ENCODE measurements at regions of chr11 and their contacts with region 1.

Region 1: DNA sequence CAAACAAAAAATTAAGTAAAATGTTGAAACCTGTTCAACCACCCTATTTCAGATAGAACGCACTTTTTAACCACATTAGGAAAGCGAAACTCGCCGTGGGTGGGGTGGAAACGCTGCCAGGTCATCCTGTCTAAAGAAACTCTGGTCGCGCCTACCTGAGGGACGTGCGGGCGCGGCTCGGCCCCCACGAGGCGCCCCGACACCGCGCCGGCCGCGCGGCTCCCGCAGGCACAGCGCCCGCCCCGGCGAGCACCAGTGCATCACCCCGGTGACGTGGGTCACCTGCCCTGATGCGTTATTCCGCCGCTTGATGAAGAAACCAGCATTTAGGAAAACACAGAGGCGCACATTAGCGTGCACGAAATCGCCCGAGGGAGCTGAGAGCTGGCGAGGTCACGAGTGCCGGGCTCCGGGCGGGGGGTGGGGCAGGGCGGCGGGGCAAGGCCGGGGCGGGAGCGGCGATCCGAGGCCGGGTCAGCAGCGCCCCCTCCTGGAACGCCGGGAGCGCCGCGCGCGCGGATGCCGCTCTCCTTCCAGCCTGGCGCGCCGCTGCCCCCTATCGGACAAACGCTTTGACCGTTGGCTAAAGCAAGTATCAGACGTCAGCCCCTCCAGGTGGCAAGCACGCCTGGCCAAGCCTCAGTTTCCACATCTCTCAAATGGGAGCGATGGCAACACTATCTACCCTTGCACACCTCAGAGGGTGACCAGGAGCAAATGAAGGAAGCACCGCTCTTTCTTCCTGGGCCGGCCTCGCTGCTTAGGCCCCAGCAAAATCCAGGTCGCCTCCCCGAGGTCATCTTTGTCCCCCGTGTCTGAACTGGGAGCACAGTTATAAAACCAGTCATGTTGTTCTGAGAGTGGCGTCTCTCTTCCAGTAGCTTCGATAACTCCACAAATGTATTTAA is 15.7 kb upstream of the SNX32 start:
- DNase-seq: peak; percentile 93 to 95
- H3K4me3 ChIP-seq: peak overlapping the region; percentile 55 to 67
- H3K27ac ChIP-seq: peak overlapping the region; percentile 40 to 65
- H3K4me1 ChIP-seq: peaks cover 0 to 10% (median 0%) of the 10 kb centered on the region in 4 donors
- H3K27me3 ChIP-seq: no peaks in the 10 kb centered on the region
- CTCF ChIP-seq: peak; percentile 98 to 100

Region 2: DNA sequence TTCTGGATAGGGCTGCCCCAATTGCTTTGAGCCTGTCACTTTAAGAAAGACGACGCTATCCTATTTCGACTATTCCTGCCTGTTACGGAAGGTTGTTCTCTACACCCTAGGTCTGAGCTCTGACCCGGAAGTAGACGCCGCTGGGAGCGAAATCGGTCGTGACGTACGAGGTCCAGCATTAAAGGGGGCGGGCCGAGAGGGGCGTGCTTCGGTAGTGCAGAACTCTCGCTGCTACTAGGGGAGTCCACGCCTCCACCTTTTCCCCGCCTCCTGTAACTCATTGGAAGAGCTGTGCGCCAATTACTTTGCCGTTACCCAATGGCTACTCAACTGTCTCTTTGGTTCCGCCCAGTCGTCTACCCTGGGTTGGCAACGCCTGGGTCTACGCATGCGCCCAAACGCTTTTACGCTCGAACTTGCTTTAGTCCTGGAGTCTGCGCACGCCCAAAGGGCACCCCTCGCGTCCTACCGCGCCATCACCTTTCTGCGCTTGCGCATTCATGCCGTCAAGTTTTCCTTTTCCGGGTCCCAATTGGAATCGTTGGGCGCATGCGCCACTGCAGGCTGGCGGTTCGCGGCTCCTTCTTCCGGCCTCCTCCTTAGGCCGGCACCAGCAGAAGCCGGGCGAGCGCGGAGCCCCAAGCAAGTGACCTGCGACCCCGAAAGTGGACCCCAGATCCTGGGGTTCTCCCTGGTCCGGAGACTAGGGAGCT is 202.7 kb before region 1 on chr11 and contains the start of gene PCNX3:
- intact Hi-C with region 1: loop called (anchors 5 kb)
- DNase-seq: peak; percentile 100
- H3K4me3 ChIP-seq: peak within 1 kb of the TSS; percentile 98
- H3K27ac ChIP-seq: peak within 1 kb of the TSS; percentile 88 to 96
- H3K4me1 ChIP-seq: peaks cover 0 to 59% (median 49%) of the 10 kb centered on the region in 4 donors
- H3K27me3 ChIP-seq: no peaks in the 10 kb centered on the region
- CTCF ChIP-seq: no peak

Region 3: GRCh38 chr11:65625628-65626342 is 192.3 kb before region 1 on chr11:
- intact Hi-C with region 1: loop called (anchors 5 kb)
- DNase-seq: peak in 1 of 2 donors; percentile 57
- H3K4me3 ChIP-seq: no peak overlapping the region
- H3K27ac ChIP-seq: no peak overlapping the region
- H3K4me1 ChIP-seq: no peaks in the 10 kb centered on the region
- H3K27me3 ChIP-seq: no peaks in the 10 kb centered on the region
- CTCF ChIP-seq: peak; percentile 38 to 49

Region 4: GRCh38 chr11:65700391-65700790 is 117.7 kb before region 1 on chr11:
- intact Hi-C with region 1: loop called (anchors 2 kb)
- DNase-seq: peak in 1 of 2 donors; percentile 19
- H3K4me3 ChIP-seq: no peak overlapping the region
- H3K27ac ChIP-seq: no peak overlapping the region
- H3K4me1 ChIP-seq: no peaks in the 10 kb centered on the region
- H3K27me3 ChIP-seq: peaks cover 0 to 15% of the 10 kb centered on the region in 2 donors
- CTCF ChIP-seq: no peak

Region 5: GRCh38 chr11:65714451-65714850 is 103.6 kb before region 1 on chr11:
- intact Hi-C with region 1: loop called (anchors 2 kb)
- DNase-seq: no peak
- H3K4me3 ChIP-seq: no peak overlapping the region
- H3K27ac ChIP-seq: no peak overlapping the region
- H3K4me1 ChIP-seq: peaks cover 0 to 40% (median 28%) of the 10 kb centered on the region in 4 donors
- H3K27me3 ChIP-seq: no peaks in the 10 kb centered on the region
- CTCF ChIP-seq: no peak

Region 6: GRCh38 chr11:65767406-65767805 is 50.7 kb before region 1 on chr11:
- intact Hi-C with region 1: no loop called
- DNase-seq: no peak
- H3K4me3 ChIP-seq: no peak overlapping the region
- H3K27ac ChIP-seq: no peak overlapping the region
- H3K4me1 ChIP-seq: peaks cover 0 to 6% (median 2%) of the 10 kb centered on the region in 4 donors
- H3K27me3 ChIP-seq: no peaks in the 10 kb centered on the region
- CTCF ChIP-seq: no peak

Region 7: DNA sequence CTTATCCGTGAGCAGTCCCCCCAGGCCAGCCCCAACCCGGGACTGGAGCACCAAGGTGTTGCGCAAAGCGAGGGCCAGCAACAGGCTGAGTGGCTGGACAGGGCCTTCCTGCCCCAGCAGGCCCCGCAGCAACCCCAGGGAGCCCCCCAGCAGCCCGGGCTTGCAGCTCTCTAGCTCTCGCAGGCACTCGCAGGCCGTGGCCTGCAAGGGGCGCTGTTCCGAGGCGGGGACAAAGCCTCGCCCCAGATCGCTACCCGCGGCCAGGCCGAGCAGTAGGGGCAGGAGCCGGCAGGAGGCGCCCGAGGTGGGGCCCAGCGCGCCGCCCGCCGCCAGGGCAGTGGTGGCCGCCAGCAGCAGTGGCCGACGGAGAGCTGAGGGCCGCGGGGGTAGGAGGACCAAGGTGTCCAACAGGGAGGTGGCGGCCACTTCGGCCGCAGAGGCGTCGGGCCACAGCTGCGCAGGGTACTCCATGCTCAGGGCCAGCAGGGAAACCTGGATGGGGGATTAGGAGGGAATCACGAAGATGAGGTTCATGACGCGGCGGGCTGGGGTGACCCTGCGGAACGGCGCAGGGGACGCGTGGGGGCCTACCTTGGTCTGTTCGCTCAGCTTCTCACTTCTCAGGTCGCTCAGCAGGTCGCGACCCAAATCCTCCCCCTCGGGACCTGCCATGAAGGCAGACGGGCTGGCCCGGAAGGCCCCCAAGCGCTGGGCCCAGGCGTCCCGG is 38.1 kb before region 1 on chr11:
- intact Hi-C with region 1: loop called (anchors 5 kb)
- DNase-seq: peak; percentile 57 to 88
- H3K4me3 ChIP-seq: peak overlapping the region; percentile 72 to 90
- H3K27ac ChIP-seq: peak overlapping the region; percentile 73 to 87
- H3K4me1 ChIP-seq: peaks cover 0 to 32% (median 19%) of the 10 kb centered on the region in 4 donors
- H3K27me3 ChIP-seq: no peaks in the 10 kb centered on the region
- CTCF ChIP-seq: peak; percentile 80 to 87

Region 8: DNA sequence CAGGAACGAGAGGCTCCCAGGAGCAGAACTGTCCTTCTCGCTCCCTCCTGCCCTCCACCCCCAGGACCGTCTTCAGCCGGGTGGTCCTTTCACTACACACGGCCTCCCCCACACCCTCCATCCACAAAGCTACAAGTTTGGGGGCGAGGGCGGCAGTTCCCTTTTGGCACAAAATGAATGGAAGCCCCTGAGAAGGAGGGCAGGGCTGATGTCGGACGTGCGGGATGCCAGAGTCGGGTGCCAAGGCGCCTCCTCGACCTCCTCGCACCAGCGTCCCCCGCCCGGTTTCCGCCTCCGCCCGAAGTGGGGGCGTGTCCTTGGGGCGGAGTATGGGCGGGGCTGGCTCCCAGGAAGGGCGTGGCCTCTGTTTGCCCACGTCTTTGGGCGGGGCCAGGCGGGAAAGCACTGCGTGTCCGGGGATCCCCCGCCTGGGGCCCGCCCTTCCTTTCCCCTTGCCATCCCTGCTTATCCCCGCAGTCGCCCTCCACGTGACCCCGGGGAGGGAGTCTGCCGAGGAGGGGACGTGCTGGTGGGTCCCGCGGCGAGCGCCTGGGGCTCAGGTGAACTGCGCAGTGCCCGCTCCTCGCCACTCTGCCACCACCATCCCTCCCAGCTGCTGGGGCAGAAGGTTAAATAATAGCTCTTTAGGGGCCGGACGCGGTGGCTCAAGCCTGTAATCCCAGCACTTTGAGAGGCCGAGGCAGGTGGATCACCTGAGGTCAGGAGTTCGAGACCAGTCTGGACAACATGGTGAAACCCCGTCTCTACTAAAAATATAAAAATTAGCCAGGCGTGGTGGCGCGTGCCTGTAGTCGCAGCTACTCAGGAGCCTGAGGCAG is 55.4 kb after region 1 on chr11:
- intact Hi-C with region 1: no loop called
- DNase-seq: peak; percentile 94 to 98
- H3K4me3 ChIP-seq: peak overlapping the region; percentile 66 to 76
- H3K27ac ChIP-seq: peak overlapping the region; percentile 96 to 98
- H3K4me1 ChIP-seq: peaks cover 0 to 34% (median 26%) of the 10 kb centered on the region in 4 donors
- H3K27me3 ChIP-seq: no peaks in the 10 kb centered on the region
- CTCF ChIP-seq: peak in 1 of 2 experiments; percentile 6

Measured in tibial artery (tissue), 4 donors.